Transverse colon (tissue), 4 donors: ENCODE measurements at regions of chr1 and their contacts with region 1.

Region 1: DNA sequence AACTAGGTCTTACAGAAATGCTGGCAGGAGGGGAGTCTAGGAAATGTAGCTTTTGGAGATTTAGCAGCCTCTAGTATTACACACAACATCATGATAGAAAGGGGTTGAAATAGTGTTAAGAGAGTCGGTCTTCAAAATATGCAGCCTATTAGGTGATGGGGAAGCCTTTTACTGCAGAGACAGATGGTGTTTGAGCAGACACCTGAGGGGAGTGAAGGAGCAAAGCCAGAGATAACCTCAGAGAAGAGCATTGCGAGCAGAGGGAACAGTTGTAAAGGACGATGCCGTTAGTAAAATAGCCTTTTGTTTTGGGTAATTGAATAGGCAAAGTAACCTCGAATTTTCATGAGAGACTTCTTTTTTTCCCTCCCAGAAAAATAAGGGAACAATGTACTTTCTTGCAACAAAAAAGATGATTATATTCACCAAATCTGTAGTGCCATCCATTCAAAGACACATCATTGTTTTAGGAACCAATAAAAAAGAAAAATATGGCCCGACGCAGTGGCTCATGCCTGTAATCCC is 66.3 kb upstream of the KIF1B start:
- DNase-seq: no peak
- H3K4me3 ChIP-seq: no peak overlapping the region
- H3K27ac ChIP-seq: no peak overlapping the region
- H3K4me1 ChIP-seq: no peaks in the 10 kb centered on the region
- H3K27me3 ChIP-seq: no peaks in the 10 kb centered on the region
- CTCF ChIP-seq: no peak
- EP300 ChIP-seq: no peak
- POLR2A ChIP-seq: no peak

Region 2: GRCh38 chr1:11407301-11407994 is 1263.4 kb after region 1 on chr1:
- in situ Hi-C with region 1: no loop called
- intact Hi-C with region 1: loop called (anchors 10 kb)
- DNase-seq: no peak
- H3K4me3 ChIP-seq: no peak overlapping the region
- H3K27ac ChIP-seq: no peak overlapping the region
- H3K4me1 ChIP-seq: no peaks in the 10 kb centered on the region
- H3K27me3 ChIP-seq: peaks cover 10% of the 10 kb centered on the region
- CTCF ChIP-seq: no peak
- EP300 ChIP-seq: no peak
- POLR2A ChIP-seq: no peak